ENCODE measurements at regions of chr13 and their contacts with region 1.

Region 1: DNA sequence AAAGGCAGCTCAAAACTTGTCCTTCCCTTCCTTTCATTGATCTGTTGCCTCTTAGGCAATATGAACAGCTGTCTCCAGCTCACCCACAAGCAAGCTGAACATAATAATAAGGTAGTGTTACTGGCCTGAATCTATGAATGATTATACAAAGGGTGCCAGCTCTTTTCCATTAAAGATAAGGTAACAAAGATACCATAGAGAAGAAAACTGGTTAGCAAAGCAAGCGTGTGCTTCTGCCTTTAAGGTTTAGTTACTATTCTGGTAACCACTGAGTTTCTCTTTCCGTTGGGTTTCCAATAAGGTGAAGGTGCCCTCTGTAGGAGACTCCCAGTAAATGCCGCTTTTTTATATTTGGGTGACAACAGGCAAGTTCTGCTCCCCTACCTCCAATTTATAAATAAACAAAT is 12.1 kb upstream of the DACH1 start:
- DNase-seq: peak; percentile 8
- H3K4me3 Mint-ChIP-seq: no peak overlapping the region
- H3K27ac Mint-ChIP-seq: no peak overlapping the region
- H3K4me1 Mint-ChIP-seq: peaks cover 2% of the 10 kb centered on the region
- H3K27me3 Mint-ChIP-seq: peaks cover 9% of the 10 kb centered on the region

Region 2: DNA sequence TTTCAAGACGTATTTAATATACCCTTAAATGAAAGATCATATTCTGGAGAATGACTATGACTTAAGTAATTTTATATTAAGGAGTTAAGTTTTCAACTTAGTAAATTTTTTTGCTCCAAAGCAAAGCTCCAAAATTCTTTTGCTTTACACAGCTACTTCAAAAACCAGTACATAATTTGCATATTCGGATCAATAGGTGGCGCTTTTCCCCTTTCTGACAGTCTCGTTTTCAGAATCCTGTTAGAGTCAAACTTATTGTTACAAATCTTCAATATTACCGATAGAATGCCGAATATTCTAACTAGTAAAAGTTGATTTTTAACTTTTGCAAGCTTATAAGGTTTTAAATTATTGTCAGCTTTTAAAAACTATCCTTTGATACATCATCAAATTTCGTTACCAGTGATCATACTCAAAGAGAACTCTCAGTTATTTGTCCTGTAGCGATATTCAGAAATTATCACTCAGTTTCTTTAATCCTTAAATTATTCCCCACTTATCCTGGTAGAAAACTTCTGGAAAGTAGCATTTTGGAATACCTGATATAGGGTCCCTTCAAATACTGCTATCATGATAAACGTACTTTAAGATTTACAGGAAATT is 918.2 kb before region 1 on chr13:
- CTCF ChIA-PET with region 1: no interaction called
- intact Hi-C with region 1: loop called (anchors 1 kb)
- DNase-seq: peak; percentile 8
- H3K4me3 Mint-ChIP-seq: no peak overlapping the region
- H3K27ac Mint-ChIP-seq: no peak overlapping the region
- H3K4me1 Mint-ChIP-seq: no peaks in the 10 kb centered on the region
- H3K27me3 Mint-ChIP-seq: no peaks in the 10 kb centered on the region

Region 3: GRCh38 chr13:71240911-71241310 is 638.2 kb before region 1 on chr13:
- CTCF ChIA-PET with region 1: no interaction called
- intact Hi-C with region 1: loop called (anchors 2 kb)
- DNase-seq: no peak
- H3K4me3 Mint-ChIP-seq: no peak overlapping the region
- H3K27ac Mint-ChIP-seq: no peak overlapping the region
- H3K4me1 Mint-ChIP-seq: no peaks in the 10 kb centered on the region
- H3K27me3 Mint-ChIP-seq: peaks cover 2% of the 10 kb centered on the region

Region 4: DNA sequence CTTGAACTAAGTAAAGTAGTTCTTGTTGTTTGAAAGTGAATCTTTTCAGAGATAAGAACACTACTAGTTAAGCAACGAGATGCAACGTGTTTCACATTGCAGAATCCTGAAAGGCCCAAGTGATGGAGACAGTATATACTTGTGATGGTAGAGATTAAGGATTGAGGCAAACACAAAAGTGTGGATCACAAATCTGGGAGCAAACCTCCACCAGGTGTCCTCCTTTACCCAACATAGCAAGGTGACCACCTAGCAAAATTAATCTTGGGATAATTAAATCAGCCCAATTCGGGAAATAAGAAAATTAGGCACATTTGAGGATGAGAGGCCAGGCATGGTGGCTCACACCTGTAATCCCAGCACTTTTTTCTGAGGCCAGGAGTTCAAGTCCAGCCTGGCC is 576.0 kb before region 1 on chr13:
- CTCF ChIA-PET with region 1: no interaction called
- intact Hi-C with region 1: loop called (anchors 1 kb)
- DNase-seq: no peak
- H3K4me3 Mint-ChIP-seq: no peak overlapping the region
- H3K27ac Mint-ChIP-seq: no peak overlapping the region
- H3K4me1 Mint-ChIP-seq: no peaks in the 10 kb centered on the region
- H3K27me3 Mint-ChIP-seq: no peaks in the 10 kb centered on the region

Region 5: GRCh38 chr13:71320452-71320851 is 558.7 kb before region 1 on chr13:
- CTCF ChIA-PET with region 1: interaction called, 3 read pairs
- intact Hi-C with region 1: loop called (anchors 1 kb)
- DNase-seq: peak; percentile 25
- H3K4me3 Mint-ChIP-seq: no peak overlapping the region
- H3K27ac Mint-ChIP-seq: no peak overlapping the region
- H3K4me1 Mint-ChIP-seq: no peaks in the 10 kb centered on the region
- H3K27me3 Mint-ChIP-seq: no peaks in the 10 kb centered on the region

Region 6: GRCh38 chr13:71797517-71797916 is 81.6 kb before region 1 on chr13:
- CTCF ChIA-PET with region 1: no interaction called
- intact Hi-C with region 1: no loop called
- DNase-seq: no peak
- H3K4me3 Mint-ChIP-seq: no peak overlapping the region
- H3K27ac Mint-ChIP-seq: no peak overlapping the region
- H3K4me1 Mint-ChIP-seq: no peaks in the 10 kb centered on the region
- H3K27me3 Mint-ChIP-seq: no peaks in the 10 kb centered on the region

Region 7: GRCh38 chr13:72125561-72125960 is 246.4 kb after region 1 on chr13:
- CTCF ChIA-PET with region 1: no interaction called
- intact Hi-C with region 1: no loop called
- DNase-seq: no peak
- H3K4me3 Mint-ChIP-seq: no peak overlapping the region
- H3K27ac Mint-ChIP-seq: no peak overlapping the region
- H3K4me1 Mint-ChIP-seq: no peaks in the 10 kb centered on the region
- H3K27me3 Mint-ChIP-seq: no peaks in the 10 kb centered on the region

Measured in activated naive CD4-positive, alpha-beta T cell treated with anti-CD3 and anti-CD28 coated beads for 36 hours (primary cell).